Calu3 (cell line): ENCODE measurements at regions of chr4 and their contacts with region 1.

Region 1: DNA sequence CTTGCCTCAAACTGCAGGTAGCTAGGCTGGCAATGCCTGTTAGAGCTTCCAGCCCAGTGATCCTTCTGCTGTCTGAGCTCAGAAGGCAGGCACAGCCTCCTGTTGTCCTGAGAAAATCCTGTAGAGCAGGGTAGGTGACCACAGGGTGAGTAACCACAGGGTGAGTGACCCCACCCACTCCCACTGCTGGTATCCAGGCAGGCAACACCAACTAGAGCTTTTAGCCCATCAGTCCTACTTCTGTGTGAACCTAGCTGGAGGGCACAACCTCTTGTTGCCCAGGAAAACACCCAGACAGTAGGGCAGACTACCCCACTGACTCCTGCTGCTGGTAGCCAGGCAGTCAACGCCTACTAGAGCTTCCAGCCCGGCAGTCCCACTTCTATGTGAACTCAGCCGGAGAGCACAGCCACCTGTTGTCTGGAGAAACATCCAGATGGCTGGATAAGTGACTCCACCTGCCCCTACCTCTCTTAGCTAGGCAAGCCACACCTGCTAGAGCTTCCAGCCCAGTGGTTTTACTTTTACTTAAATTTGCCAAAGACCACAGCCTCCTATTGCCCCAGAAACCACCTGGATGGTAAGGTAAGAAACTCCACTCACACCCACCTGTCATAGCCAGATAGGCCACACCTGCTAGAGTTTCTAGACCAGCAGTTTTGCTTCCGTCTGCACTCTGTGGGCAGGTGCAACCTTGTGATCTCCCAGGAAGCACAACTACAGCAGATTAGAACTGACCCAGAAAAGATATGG is 371.6 kb downstream of the INPP4B start:
- DNase-seq: peak; percentile 85
- H3K4me3 Mint-ChIP-seq: peak overlapping the region; percentile 83
- H3K27ac Mint-ChIP-seq: peak overlapping the region; percentile 97
- H3K4me1 Mint-ChIP-seq: peaks cover 41% of the 10 kb centered on the region
- H3K27me3 Mint-ChIP-seq: no peaks in the 10 kb centered on the region
- CTCF ChIP-seq: no peak

Region 2: DNA sequence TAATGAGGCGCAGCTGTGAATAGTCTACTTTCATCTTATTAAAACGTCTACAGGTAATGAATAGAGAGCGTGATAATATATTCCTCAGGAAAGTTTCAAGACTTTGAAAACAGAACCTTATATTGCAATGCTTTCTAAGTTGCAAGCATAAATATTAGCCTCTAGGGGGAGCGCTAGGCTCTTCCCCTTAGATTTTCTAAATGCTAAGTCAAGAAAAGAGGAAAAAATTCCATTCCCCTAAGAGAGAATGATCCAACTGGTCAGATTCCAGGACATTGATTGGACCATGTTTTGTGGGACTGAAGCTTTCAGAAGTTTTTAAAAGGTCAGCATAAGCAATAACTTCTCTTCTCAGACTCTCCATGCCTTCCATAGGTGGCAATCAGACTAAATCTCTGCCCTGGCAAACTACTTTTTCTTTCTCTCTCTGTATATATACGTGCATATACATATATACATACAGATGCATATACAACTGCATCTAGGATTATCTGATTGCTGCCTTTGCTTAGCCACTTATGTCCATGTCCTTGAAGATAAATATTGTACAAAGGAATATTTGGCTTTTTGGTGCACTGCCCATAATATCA is 121.3 kb before region 1 on chr4:
- CTCF ChIA-PET with region 1: no interaction called
- intact Hi-C with region 1: loop called (anchors 5 kb)
- DNase-seq: no peak
- H3K4me3 Mint-ChIP-seq: no peak overlapping the region
- H3K27ac Mint-ChIP-seq: peak overlapping the region; percentile 71
- H3K4me1 Mint-ChIP-seq: peaks cover 69% of the 10 kb centered on the region
- H3K27me3 Mint-ChIP-seq: no peaks in the 10 kb centered on the region
- CTCF ChIP-seq: peak; percentile 28

Region 3: GRCh38 chr4:142413485-142413884 is 61.0 kb before region 1 on chr4:
- CTCF ChIA-PET with region 1: no interaction called
- intact Hi-C with region 1: loop called (anchors 2 kb)
- DNase-seq: no peak
- H3K4me3 Mint-ChIP-seq: no peak overlapping the region
- H3K27ac Mint-ChIP-seq: peak overlapping the region; percentile 86
- H3K4me1 Mint-ChIP-seq: peaks cover 49% of the 10 kb centered on the region
- H3K27me3 Mint-ChIP-seq: no peaks in the 10 kb centered on the region
- CTCF ChIP-seq: no peak

Region 4: GRCh38 chr4:142516670-142517526 is 42.4 kb after region 1 on chr4:
- CTCF ChIA-PET with region 1: interaction called, 6 read pairs
- intact Hi-C with region 1: loop called (anchors 5 kb)
- DNase-seq: peak; percentile 17
- H3K4me3 Mint-ChIP-seq: peak overlapping the region; percentile 7
- H3K27ac Mint-ChIP-seq: peak overlapping the region; percentile 83
- H3K4me1 Mint-ChIP-seq: peaks cover 39% of the 10 kb centered on the region
- H3K27me3 Mint-ChIP-seq: no peaks in the 10 kb centered on the region
- CTCF ChIP-seq: no peak

Region 5: DNA sequence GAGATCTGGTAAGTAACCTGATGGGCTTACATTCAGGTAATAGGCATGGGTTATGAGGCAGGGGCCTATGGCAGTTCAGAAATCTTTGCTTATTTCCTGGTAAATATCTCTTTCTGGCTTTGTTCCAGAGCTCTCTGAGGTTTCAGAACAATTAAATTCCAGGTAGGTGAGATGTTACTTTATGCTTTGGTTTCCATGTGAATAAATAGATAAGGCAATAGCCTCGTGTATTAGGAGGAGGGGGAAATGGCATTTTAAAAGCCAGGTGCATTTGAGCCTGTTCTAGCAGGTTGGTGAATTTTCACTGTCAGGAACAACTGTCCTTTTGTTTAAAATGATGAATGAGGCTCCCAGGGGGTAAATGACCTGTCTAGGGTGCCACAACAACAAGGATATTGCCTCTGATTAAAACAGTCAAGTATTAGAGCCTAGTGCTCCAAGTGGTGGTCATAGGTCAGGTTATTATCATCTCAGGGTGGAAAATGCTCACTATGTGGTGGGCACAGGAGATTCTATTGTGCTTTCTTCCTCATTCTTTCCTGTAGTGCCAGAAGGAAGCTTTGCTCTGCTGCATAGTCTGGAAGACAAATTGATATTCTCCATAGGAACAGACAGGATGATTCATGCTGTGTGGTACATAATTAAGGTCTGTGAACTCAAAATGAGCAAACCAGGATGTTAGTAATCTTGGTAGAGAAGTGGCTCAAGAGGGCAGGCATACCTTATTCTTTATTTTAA is 75.4 kb after region 1 on chr4:
- CTCF ChIA-PET with region 1: interaction called, 7 read pairs
- intact Hi-C with region 1: loop called (anchors 1 kb)
- DNase-seq: peak; percentile 72
- H3K4me3 Mint-ChIP-seq: no peak overlapping the region
- H3K27ac Mint-ChIP-seq: peak overlapping the region; percentile 99
- H3K4me1 Mint-ChIP-seq: peaks cover 62% of the 10 kb centered on the region
- H3K27me3 Mint-ChIP-seq: no peaks in the 10 kb centered on the region
- CTCF ChIP-seq: no peak

Region 6: GRCh38 chr4:142719854-142720541 is 245.5 kb after region 1 on chr4:
- CTCF ChIA-PET with region 1: interaction called, 6 read pairs
- intact Hi-C with region 1: loop called (anchors 1 kb)
- DNase-seq: no peak
- H3K4me3 Mint-ChIP-seq: no peak overlapping the region
- H3K27ac Mint-ChIP-seq: no peak overlapping the region
- H3K4me1 Mint-ChIP-seq: peaks cover 15% of the 10 kb centered on the region
- H3K27me3 Mint-ChIP-seq: no peaks in the 10 kb centered on the region
- CTCF ChIP-seq: no peak

Region 7: DNA sequence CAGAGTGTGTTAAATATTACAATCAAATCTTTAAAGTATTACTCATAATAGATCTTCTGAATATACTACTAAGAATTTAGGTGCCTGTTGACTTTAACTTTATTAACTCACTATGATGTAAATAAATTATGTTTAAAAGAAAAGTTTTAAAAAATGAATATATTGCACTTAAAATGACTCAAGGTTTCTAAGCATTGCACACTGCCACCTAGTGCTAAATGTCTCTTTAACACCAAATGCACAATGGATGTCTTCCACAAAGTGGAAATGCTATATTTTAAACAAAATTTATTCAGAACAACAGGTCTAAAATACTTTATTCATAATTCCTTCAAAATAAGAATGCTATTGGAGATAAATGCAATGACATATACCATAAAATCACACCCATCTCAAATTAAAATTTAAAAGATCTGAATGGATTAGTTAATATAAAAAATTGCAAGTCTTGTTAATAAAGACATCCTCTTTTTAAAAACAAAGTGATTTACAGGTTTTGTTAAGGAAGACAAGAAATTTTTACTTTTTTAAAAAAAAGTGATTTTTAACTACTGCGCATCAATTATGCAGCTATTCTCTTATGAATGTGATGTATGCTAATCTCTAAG is 366.1 kb after region 1 on chr4:
- CTCF ChIA-PET with region 1: interaction called, 5 read pairs
- intact Hi-C with region 1: loop called (anchors 2 kb)
- DNase-seq: no peak
- H3K4me3 Mint-ChIP-seq: no peak overlapping the region
- H3K27ac Mint-ChIP-seq: no peak overlapping the region
- H3K4me1 Mint-ChIP-seq: peaks cover 17% of the 10 kb centered on the region
- H3K27me3 Mint-ChIP-seq: no peaks in the 10 kb centered on the region
- CTCF ChIP-seq: peak; percentile 33